ENCODE measurements at regions of chr6 and their contacts with region 1.

Region 1: DNA sequence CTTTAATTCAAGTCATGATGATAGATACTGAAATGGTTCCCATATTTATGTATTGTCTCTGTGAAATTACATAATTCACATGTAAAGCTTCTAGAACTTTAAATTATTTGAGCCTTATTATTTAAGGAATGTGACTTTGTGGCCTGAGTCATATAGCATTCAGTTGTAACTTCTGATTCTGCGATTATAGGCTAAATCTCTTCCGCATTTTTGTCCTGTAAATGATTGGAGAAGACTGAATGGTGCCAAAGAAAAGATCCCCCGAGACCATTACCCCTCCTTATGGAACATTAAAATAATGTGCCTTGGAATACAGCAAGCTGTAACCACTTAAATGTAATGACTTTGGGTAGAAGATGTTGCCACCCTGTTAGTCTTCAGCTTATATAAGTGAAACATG is 63.3 kb upstream of the MAP7 start:
- DNase-seq: no peak
- H3K4me3 ChIP-seq: no peak overlapping the region
- H3K4me3 Mint-ChIP-seq: no peak overlapping the region
- H3K27ac ChIP-seq: no peak overlapping the region
- H3K27ac Mint-ChIP-seq: peak overlapping the region in 1 of 7 donors; percentile 31
- H3K4me1 ChIP-seq: no peaks in the 10 kb centered on the region
- H3K4me1 Mint-ChIP-seq: peaks cover 4 to 18% (median 6%) of the 10 kb centered on the region in 4 donors
- H3K27me3 ChIP-seq: no peaks in the 10 kb centered on the region
- H3K27me3 Mint-ChIP-seq: no peaks in the 10 kb centered on the region

Region 2: DNA sequence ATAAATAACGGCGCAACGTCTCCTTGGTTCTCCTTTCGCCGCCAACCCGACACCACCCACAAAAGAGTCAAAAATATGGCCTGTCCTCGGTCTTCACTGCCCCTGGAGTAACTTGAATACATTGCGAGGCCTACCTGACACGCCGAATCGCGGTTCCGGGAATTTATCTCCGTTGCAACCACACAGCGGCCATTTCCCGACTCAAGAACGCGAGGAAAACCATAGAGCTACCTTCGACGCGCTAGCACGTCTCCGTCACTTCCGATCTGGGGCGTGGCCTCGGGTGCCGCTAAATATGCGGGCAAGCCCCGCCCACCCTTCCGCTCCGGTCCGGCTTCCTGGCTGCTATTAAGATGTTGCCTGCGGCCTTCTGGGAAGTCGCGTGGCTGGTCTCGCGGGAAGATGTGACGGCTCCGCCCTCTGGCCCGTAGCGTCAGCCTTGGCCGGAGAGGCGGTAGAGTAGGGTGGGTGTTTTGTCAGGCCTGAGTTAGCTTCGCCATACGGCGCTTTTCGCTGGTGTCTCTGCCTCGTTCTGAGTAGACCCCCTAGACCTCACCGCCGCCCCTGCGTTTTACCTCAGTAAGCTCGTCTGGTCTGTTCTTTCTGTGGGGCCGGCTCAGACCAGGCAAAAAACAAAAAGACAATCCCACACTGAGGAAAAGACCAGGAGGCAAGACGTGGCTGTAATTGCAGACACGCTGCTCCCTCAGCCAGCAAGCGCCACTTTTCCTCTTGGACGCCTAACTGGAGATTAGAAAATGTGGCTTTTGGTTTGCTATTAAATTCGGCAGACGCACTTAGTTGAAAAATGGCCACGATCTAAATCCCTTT is 323.7 kb before region 1 on chr6 and contains the start of gene BCLAF1:
- CTCF ChIA-PET with region 1: no interaction called
- POLR2A ChIA-PET with region 1: no interaction called
- intact Hi-C with region 1: no loop called
- DNase-seq: peak; percentile 99 to 100 (median 100)
- H3K4me3 ChIP-seq: peak within 1 kb of the TSS; percentile 92 to 94
- H3K4me3 Mint-ChIP-seq: peak within 1 kb of the TSS; percentile 93 to 100 (median 100)
- H3K27ac ChIP-seq: peak within 1 kb of the TSS; percentile 100
- H3K27ac Mint-ChIP-seq: peak within 1 kb of the TSS; percentile 99 to 100 (median 100)
- H3K4me1 ChIP-seq: peaks cover 56% of the 10 kb centered on the region
- H3K4me1 Mint-ChIP-seq: peaks cover 22 to 72% (median 47%) of the 10 kb centered on the region in 4 donors
- H3K27me3 ChIP-seq: no peaks in the 10 kb centered on the region
- H3K27me3 Mint-ChIP-seq: peaks cover 5% of the 10 kb centered on the region in 2 donors
- total RNA-seq, gene BCLAF1: 233 to 242 TPM

Region 3: GRCh38 chr6:136600818-136601217 is 12.7 kb before region 1 on chr6:
- CTCF ChIA-PET with region 1: interaction called, 12 read pairs
- POLR2A ChIA-PET with region 1: no interaction called
- intact Hi-C with region 1: no loop called
- DNase-seq: no peak
- H3K4me3 ChIP-seq: no peak overlapping the region
- H3K4me3 Mint-ChIP-seq: no peak overlapping the region
- H3K27ac ChIP-seq: no peak overlapping the region
- H3K27ac Mint-ChIP-seq: no peak overlapping the region
- H3K4me1 ChIP-seq: no peaks in the 10 kb centered on the region
- H3K4me1 Mint-ChIP-seq: peaks cover 6 to 8% (median 7%) of the 10 kb centered on the region in 4 donors
- H3K27me3 ChIP-seq: no peaks in the 10 kb centered on the region
- H3K27me3 Mint-ChIP-seq: no peaks in the 10 kb centered on the region

Region 4: GRCh38 chr6:136651982-136652381 is 38.5 kb after region 1 on chr6:
- CTCF ChIA-PET with region 1: no interaction called
- POLR2A ChIA-PET with region 1: no interaction called
- intact Hi-C with region 1: no loop called
- DNase-seq: no peak
- H3K4me3 ChIP-seq: no peak overlapping the region
- H3K4me3 Mint-ChIP-seq: no peak overlapping the region
- H3K27ac ChIP-seq: no peak overlapping the region
- H3K27ac Mint-ChIP-seq: peak overlapping the region in 1 of 7 donors; percentile 55
- H3K4me1 ChIP-seq: peaks cover 14% of the 10 kb centered on the region
- H3K4me1 Mint-ChIP-seq: peaks cover 0 to 3% (median 1%) of the 10 kb centered on the region in 4 donors
- H3K27me3 ChIP-seq: no peaks in the 10 kb centered on the region
- H3K27me3 Mint-ChIP-seq: no peaks in the 10 kb centered on the region

Region 5: DNA sequence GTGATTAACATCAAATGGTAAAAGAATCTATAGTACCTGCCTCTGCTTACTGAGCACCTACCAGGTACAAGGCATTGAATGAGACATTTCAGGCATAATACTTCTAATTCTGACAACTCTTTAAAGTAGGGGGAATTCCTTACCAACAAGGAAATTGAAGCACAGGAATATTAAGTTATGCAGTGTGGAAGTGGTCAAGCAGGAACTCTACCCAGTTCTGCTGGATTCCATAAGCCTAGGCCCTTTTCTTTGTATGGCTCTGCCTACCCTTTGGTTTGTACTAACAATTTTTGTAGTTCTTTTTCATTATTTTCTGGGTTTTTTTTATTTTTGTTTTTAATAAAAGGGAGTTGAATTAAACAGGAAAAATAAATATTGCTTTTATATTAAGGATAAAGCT is 64.4 kb after region 1 on chr6:
- CTCF ChIA-PET with region 1: no interaction called
- POLR2A ChIA-PET with region 1: no interaction called
- intact Hi-C with region 1: no loop called
- DNase-seq: no peak
- H3K4me3 ChIP-seq: no peak overlapping the region
- H3K4me3 Mint-ChIP-seq: no peak overlapping the region
- H3K27ac ChIP-seq: no peak overlapping the region
- H3K27ac Mint-ChIP-seq: no peak overlapping the region
- H3K4me1 ChIP-seq: no peaks in the 10 kb centered on the region
- H3K4me1 Mint-ChIP-seq: peaks cover 0 to 11% (median 7%) of the 10 kb centered on the region in 4 donors
- H3K27me3 ChIP-seq: no peaks in the 10 kb centered on the region
- H3K27me3 Mint-ChIP-seq: no peaks in the 10 kb centered on the region

Region 6: DNA sequence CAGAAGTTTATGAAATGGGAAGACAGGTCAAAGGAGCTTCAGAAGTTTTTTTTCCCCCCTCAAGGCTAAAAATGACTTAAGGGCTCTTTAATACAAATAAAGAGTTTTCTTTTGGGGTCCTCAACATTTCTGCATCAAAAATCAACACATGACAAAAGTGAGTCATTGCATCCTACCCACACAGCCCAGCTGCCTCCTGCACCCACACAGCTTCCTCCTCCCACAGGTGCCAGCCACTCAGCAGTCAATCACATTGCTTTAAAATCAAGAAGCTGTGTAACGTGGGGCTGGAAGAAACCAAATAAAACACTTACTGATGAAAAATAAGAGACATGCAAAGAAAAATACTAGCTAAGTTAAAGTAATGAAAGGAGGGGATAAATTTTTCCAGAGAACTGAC is 110.3 kb after region 1 on chr6:
- CTCF ChIA-PET with region 1: no interaction called
- POLR2A ChIA-PET with region 1: no interaction called
- intact Hi-C with region 1: no loop called
- DNase-seq: peak in 4 of 5 donors; percentile 9 to 49 (median 32)
- H3K4me3 ChIP-seq: no peak overlapping the region
- H3K4me3 Mint-ChIP-seq: peak overlapping the region in 5 of 8 donors; percentile 12 to 54 (median 39)
- H3K27ac ChIP-seq: no peak overlapping the region
- H3K27ac Mint-ChIP-seq: peak overlapping the region in 4 of 7 donors; percentile 28 to 54 (median 50)
- H3K4me1 ChIP-seq: peaks cover 37% of the 10 kb centered on the region
- H3K4me1 Mint-ChIP-seq: peaks cover 37 to 61% (median 45%) of the 10 kb centered on the region in 4 donors
- H3K27me3 ChIP-seq: no peaks in the 10 kb centered on the region
- H3K27me3 Mint-ChIP-seq: no peaks in the 10 kb centered on the region

Measured in CD4-positive, alpha-beta memory T cell (primary cell).